Activated naive CD4-positive, alpha-beta T cell treated with anti-CD3 and anti-CD28 coated beads, Interleukin-2, amount 10 ng/mL, durations not matched to agents 7 days and 5 days (primary cell): ENCODE measurements at regions of chr2 and their contacts with region 1.

Region 1: DNA sequence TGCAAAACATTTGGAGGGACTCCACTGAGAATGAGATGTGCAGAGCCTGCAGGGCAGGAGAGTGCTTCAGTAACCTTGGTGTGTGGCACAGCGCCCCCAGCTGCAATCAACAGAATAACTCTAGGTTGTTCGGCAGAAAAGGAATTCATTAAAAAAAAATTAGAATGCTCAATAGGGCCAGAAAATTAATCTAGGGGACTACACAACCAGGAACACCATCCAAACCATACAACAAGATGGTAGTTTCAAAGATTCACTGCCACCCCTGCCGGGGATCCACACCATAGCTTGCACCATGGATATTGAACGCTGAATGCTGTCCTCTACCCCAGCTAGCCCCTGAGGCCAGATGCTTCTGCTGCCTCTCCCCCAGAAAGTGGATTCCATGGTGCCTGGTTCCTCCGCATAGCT is 50.1 kb downstream of the THUMPD2 start:
- DNase-seq: peak; percentile 51
- H3K4me3 Mint-ChIP-seq: no peak overlapping the region
- H3K27ac Mint-ChIP-seq: no peak overlapping the region
- H3K4me1 Mint-ChIP-seq: peaks cover 8% of the 10 kb centered on the region
- H3K27me3 Mint-ChIP-seq: peaks cover 11% of the 10 kb centered on the region

Region 2: DNA sequence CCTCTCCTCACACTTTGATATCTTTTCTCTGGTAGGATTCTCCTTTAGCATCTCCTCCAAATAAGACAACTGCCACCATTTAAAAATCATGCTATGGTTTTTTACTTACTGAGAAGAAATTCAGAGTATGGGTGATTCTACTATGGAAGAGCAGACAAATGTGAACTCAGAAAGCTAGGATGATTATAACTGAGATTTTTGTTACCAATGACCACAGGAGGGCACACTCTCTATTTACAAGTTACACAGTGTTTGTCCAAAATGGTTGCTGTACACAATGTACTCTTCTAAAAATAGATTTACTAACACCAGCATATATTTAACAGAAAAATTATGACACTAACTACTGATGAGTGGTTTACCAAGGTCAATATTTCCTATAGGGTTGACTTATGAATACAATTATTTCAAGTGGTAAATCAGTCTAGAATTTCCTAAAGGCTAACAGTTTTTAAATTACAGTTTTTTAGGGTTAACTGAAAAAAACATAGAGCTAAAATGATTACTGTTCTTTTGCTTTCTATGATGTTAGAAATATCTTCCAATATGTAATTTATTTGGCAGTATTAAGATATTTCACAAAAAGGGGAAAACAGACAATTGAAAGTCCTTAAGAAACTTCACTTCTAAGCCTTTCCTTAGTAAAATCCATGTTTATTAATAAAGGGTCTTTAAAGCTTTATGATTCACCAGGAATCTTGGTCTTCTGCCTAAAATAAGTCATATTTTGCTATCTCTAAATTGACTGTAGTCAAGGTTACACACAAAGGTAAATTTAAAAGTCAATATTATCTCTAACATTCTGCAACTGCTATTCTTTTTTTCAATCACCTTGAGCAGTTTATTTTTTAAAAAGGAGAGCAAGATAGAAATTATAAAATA is 349.1 kb before region 1 on chr2:
- CTCF ChIA-PET with region 1: interaction called, 46 read pairs
- DNase-seq: no peak
- H3K4me3 Mint-ChIP-seq: no peak overlapping the region
- H3K27ac Mint-ChIP-seq: no peak overlapping the region
- H3K4me1 Mint-ChIP-seq: peaks cover 8% of the 10 kb centered on the region
- H3K27me3 Mint-ChIP-seq: no peaks in the 10 kb centered on the region

Region 3: DNA sequence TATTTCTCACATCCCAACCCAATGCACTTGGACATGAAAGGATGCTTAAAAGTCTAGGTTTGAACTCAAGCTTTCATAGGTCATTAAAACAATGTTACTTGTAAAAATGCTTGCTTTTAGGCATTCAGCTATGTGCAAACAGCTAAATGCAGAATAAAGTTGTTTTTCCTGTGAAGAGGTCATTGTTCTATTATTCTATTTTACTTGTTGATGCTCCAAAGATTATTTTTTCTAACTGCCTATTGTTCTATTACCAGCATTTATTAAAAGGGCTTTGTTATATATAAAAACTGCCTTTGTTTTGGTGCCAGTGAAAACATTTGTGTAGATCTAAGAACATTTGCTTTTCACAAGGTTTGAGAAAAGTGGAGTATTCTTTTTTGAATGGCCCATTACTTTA is 13.9 kb before region 1 on chr2:
- CTCF ChIA-PET with region 1: interaction called, 13 read pairs
- DNase-seq: no peak
- H3K4me3 Mint-ChIP-seq: no peak overlapping the region
- H3K27ac Mint-ChIP-seq: no peak overlapping the region
- H3K4me1 Mint-ChIP-seq: no peaks in the 10 kb centered on the region
- H3K27me3 Mint-ChIP-seq: peaks cover 15% of the 10 kb centered on the region

Region 4: GRCh38 chr2:39743269-39743776 is 14.4 kb after region 1 on chr2:
- CTCF ChIA-PET with region 1: interaction called, 10 read pairs
- DNase-seq: no peak
- H3K4me3 Mint-ChIP-seq: no peak overlapping the region
- H3K27ac Mint-ChIP-seq: no peak overlapping the region
- H3K4me1 Mint-ChIP-seq: no peaks in the 10 kb centered on the region
- H3K27me3 Mint-ChIP-seq: no peaks in the 10 kb centered on the region

Region 5: DNA sequence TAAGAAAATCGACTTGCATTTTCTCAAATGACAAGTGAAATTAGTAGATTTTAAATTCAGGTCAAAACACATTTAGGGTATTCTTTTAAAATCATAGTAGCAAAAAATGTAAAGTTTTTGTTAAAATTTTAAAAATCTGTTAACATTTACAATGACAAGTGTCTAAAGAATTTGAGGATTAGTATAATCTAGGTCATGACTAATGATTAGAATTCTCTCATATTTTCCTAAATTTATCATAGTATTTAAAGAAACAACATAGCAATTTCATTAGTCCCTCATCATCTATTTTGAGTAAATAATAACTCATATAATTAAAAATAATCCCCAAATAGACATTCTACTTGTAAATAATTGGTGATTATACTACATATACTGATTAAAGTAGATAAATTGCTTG is 26.5 kb after region 1 on chr2:
- CTCF ChIA-PET with region 1: interaction called, 14 read pairs
- DNase-seq: no peak
- H3K4me3 Mint-ChIP-seq: no peak overlapping the region
- H3K27ac Mint-ChIP-seq: no peak overlapping the region
- H3K4me1 Mint-ChIP-seq: no peaks in the 10 kb centered on the region
- H3K27me3 Mint-ChIP-seq: no peaks in the 10 kb centered on the region

Region 6: DNA sequence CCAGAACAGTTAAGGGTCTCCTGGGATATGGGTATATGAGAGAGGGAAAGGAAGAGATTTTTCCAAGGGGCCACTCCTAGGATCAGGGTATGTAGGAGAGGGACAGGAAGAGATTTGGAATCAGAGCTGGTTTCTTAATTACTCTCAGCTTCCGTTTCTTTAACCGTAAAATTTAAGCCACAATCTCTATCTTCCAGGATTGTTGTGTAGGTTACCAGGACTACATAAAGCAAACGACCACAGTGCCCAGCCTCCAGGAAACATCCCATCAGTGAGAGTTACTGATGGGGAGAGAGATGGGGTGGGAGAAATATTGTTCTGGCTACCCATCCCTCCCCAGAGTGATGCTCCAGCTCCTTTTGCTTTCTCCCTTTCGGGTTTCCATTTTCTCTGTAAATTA is 164.7 kb after region 1 on chr2:
- CTCF ChIA-PET with region 1: no interaction called
- DNase-seq: no peak
- H3K4me3 Mint-ChIP-seq: no peak overlapping the region
- H3K27ac Mint-ChIP-seq: no peak overlapping the region
- H3K4me1 Mint-ChIP-seq: no peaks in the 10 kb centered on the region
- H3K27me3 Mint-ChIP-seq: peaks cover 3% of the 10 kb centered on the region